BJ (cell line): ENCODE measurements at regions of chr1 and their contacts with region 1.

Region 1: GRCh38 chr1:161098210-161099068 is at the start of gene KLHDC9:
- DNase-seq: no peak
- H3K4me3 ChIP-seq: peak within 1 kb of the TSS; percentile 66
- H3K27me3 ChIP-seq: no peaks in the 10 kb centered on the region
- CTCF ChIP-seq: peak; percentile 39; the same call in 1 of the 2 replicates
- polyA plus RNA-seq, gene KLHDC9: 3.9 and 5.8 TPM in 2 replicates

Region 2: GRCh38 chr1:160997323-160998038 is 101.0 kb before region 1 on chr1:
- CTCF ChIA-PET with region 1: interaction called, 96 read pairs
- POLR2A ChIA-PET with region 1: interaction called, 6 read pairs
- DNase-seq: no peak
- H3K4me3 ChIP-seq: no peak overlapping the region
- H3K27me3 ChIP-seq: no peaks in the 10 kb centered on the region; the same call in 1 of the 2 replicates
- CTCF ChIP-seq: peak; percentile 78

Region 3: GRCh38 chr1:161045750-161046571 is 52.5 kb before region 1 on chr1 and contains the start of gene USF1:
- CTCF ChIA-PET with region 1: interaction called, 48 read pairs
- POLR2A ChIA-PET with region 1: no interaction called
- DNase-seq: peak; percentile 74
- H3K4me3 ChIP-seq: peak within 1 kb of the TSS; percentile 70
- H3K27me3 ChIP-seq: no peaks in the 10 kb centered on the region
- CTCF ChIP-seq: no peak
- polyA plus RNA-seq, gene USF1: 33.0 and 40.4 TPM in 2 replicates

Region 4: DNA sequence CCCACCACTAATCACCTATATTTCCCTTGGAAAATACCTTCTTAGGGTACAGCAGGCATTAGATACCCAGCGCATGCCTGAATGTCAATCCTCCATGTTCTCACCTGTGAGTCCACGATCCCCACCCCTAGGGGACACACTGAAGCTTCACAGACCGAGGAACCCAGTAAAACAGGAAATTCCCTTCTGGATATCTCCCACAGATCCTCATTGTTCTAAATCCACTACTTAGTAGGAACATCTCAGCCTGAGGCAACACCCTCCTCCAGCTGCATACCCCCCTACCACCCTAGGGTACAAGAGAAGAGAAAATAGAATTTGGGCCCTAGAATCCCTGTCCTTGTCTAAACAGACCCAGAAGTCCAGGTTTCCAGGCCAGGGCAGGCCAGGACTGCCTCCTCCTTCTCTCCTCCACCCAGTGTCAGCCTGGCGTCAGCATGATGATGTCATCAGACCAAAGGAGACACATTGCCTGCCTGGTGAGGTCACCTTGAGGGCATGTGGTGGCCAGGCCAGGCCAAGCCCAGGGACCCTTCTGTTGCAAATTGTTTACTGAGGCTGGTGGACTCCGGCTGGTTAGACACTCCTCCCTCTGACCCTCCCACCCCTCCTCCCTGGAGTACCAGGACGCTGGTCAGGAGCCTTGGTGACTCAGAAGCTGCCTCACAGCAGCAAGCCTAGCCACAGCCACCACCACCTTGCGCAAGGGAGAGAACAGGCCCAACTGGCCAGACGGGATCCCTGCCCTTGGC is 15.3 kb before region 1 on chr1:
- CTCF ChIA-PET with region 1: interaction called, 132 read pairs
- POLR2A ChIA-PET with region 1: no interaction called
- DNase-seq: peak; percentile 63
- H3K4me3 ChIP-seq: no peak overlapping the region
- H3K27me3 ChIP-seq: no peaks in the 10 kb centered on the region
- CTCF ChIP-seq: no peak

Region 5: GRCh38 chr1:161132410-161133219 is 34.2 kb after region 1 on chr1 and contains the start of gene DEDD:
- CTCF ChIA-PET with region 1: interaction called, 25 read pairs
- POLR2A ChIA-PET with region 1: no interaction called
- DNase-seq: peak; percentile 88
- H3K4me3 ChIP-seq: peak within 1 kb of the TSS; percentile 97
- H3K27me3 ChIP-seq: no peaks in the 10 kb centered on the region
- CTCF ChIP-seq: 0 out of 2 replicates have a peak, but pooled peaks have one; percentile 6
- polyA plus RNA-seq, gene DEDD: 46.4 and 74.0 TPM in 2 replicates

Region 6: DNA sequence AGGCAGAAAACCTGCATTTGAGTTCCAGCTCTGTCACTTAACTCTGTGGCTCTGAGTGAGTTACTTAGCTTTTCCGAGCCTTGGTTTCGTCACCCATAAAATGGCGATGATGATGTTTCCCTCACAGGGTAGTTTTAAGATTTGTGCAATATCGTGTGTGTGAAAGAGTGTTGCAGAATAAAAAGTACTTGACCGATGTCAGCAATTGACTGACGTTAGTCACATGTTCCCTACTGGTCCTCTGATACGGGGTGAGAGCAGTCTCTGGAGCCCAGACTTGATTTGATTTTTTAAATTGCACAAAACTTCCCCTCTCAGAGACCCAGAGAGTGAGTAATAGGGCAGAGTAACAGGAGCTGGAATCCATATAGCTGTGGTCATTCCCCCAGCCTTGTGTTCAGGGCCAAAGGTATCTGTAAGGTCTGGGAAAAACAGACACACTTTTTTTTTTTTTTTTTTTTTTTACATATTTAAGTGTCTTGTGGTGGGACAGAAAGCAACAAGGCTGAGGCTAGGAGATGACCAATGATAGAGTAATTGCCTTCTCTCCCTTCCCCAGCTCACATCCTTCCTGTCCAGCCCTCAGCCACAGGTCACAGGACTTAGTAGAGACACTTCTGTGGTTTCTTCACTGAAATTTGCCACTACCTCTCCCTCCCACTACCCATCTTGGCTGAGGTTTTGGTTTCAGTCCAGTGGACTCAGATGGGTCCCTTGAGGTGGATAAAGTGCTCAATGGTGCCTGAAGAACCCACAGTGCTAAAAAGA is 118.7 kb after region 1 on chr1:
- CTCF ChIA-PET with region 1: no interaction called
- POLR2A ChIA-PET with region 1: no interaction called
- DNase-seq: peak; percentile 46
- H3K4me3 ChIP-seq: no peak overlapping the region
- H3K27me3 ChIP-seq: no peaks in the 10 kb centered on the region
- CTCF ChIP-seq: no peak